Aorta (tissue), 5 donors: ENCODE measurements at regions of chr2 and their contacts with region 1.

Region 1: DNA sequence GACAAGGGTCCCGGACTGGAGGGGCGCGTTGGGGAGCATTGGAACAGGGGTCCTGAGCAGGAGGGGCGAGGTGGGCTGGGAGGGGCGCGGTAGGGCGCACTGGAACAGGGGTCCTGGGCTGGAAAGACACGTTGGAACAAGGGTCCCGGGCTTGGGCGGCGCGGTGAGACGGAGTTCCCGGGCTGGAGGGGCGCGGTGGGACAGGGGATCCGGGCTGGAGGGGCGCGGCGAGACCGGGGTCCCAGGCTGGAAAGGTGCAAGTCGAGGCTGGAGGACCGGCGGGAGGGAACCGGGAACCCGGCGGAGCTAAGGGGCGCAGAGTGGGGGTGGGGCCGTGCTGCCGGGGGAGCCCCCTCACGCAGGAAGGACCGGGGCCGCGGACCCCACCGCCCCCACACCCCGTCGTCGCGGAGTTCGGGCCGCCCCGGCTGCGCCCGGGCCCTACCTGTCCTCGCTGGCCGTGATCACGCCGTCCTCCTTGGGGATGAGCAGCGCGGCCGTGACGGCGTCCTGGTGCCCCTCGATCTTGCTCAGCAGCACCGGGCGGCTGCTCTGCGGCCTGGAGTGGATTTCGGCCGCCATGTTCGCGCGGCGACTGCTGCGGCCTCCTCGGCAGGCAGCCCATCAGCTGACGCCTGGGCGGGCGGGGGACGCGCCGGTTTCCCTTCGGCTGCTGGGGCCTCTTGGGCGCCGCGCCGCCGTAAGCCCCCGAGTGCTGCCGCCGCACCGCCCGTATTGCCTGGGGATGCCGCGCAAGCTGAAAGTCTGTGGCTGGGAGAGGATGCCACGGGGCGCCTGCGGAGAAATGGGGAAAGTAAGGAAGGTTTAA is at the start of gene WDFY1:
- DNase-seq: peak; percentile 95 to 96
- ATAC-seq: peak; percentile 95
- H3K4me3 ChIP-seq: peak within 1 kb of the TSS; percentile 52 to 77
- H3K27ac ChIP-seq: peak within 1 kb of the TSS; percentile 72 to 80
- H3K4me1 ChIP-seq: peaks cover 0 to 1% of the 10 kb centered on the region in 2 donors
- H3K27me3 ChIP-seq: no peaks in the 10 kb centered on the region
- total RNA-seq, gene WDFY1: 51.1 to 56.5 TPM

Region 2: GRCh38 chr2:223901854-223902253 is 43.1 kb before region 1 on chr2:
- intact Hi-C with region 1: no loop called
- DNase-seq: no peak
- ATAC-seq: no peak
- H3K4me3 ChIP-seq: no peak overlapping the region
- H3K27ac ChIP-seq: no peak overlapping the region
- H3K4me1 ChIP-seq: peaks cover 0 to 3% of the 10 kb centered on the region in 2 donors
- H3K27me3 ChIP-seq: no peaks in the 10 kb centered on the region

Region 3: DNA sequence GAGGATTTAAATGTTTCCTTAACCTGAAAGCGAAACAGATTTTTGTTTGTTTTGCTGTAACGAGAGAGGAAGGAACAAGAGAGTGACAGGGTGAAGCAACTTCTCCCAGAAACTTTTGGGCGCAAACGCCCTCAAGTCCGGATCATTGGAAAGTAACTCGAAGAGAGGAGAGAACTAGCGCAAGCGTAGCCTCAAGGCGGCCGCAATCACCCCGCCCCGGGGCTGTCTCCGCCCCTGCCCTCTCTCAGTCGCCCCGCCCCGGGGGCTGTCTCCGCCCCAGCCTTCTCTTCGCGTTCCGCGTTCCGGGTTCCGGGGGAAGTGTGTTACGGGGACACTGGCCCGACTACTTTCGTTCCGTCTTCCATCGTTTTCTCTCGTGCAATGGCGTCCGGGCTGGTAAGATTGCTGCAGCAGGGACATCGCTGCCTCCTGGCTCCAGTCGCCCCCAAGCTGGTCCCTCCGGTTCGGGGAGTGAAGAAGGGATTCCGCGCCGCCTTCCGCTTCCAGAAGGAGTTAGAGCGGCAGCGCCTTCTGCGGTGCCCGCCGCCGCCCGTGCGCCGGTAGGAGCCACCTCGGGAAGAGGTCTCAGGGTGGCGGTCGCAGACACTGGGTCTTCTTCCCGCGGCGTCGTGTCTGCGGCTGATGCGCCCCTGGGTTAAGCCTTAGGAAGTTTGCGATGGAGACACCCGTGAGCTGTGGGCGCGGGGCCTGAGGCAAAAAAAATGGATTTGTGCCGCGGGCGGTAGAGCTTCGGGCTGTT is 12.4 kb after region 1 on chr2 and contains the start of gene MRPL44:
- intact Hi-C with region 1: loop called in 1 of 2 experiments (anchors 1 kb)
- DNase-seq: peak; percentile 97 to 99
- ATAC-seq: peak; percentile 100
- H3K4me3 ChIP-seq: peak within 1 kb of the TSS; percentile 75 to 98
- H3K27ac ChIP-seq: peak within 1 kb of the TSS; percentile 88 to 96
- H3K4me1 ChIP-seq: peaks cover 2 to 12% of the 10 kb centered on the region in 2 donors
- H3K27me3 ChIP-seq: no peaks in the 10 kb centered on the region
- total RNA-seq, gene MRPL44: 11.6 to 13.5 TPM